Sigmoid colon (tissue), 7 donors: ENCODE measurements at regions of chr3 and their contacts with region 1.

Region 1: GRCh38 chr3:47836986-47837385 is 34.0 kb downstream of the DHX30 start:
- DNase-seq: no peak
- H3K4me3 ChIP-seq: no peak overlapping the region
- H3K27ac ChIP-seq: no peak overlapping the region
- H3K4me1 ChIP-seq: no peaks in the 10 kb centered on the region
- H3K27me3 ChIP-seq: no peaks in the 10 kb centered on the region
- CTCF ChIP-seq: no peak
- EP300 ChIP-seq: no peak
- POLR2A ChIP-seq: no peak

Region 2: GRCh38 chr3:47715928-47716327 is 121.1 kb before region 1 on chr3:
- intact Hi-C with region 1: no loop called
- DNase-seq: no peak
- H3K4me3 ChIP-seq: no peak overlapping the region
- H3K27ac ChIP-seq: no peak overlapping the region
- H3K4me1 ChIP-seq: no peaks in the 10 kb centered on the region
- H3K27me3 ChIP-seq: no peaks in the 10 kb centered on the region
- CTCF ChIP-seq: no peak
- EP300 ChIP-seq: no peak
- POLR2A ChIP-seq: no peak

Region 3: GRCh38 chr3:48151058-48151806 is 314.2 kb after region 1 on chr3:
- intact Hi-C with region 1: loop called (anchors 5 kb)
- DNase-seq: peak; percentile 90
- H3K4me3 ChIP-seq: no peak overlapping the region
- H3K27ac ChIP-seq: peak overlapping the region in 3 of 4 donors; percentile 20 to 51 (median 49)
- H3K4me1 ChIP-seq: peaks cover 0 to 13% (median 6%) of the 10 kb centered on the region in 4 donors
- H3K27me3 ChIP-seq: no peaks in the 10 kb centered on the region
- CTCF ChIP-seq: peak; percentile 74 to 80 (median 78)
- EP300 ChIP-seq: no peak
- POLR2A ChIP-seq: no peak